ENCODE measurements at regions of chr3 and their contacts with region 1.

Region 1: DNA sequence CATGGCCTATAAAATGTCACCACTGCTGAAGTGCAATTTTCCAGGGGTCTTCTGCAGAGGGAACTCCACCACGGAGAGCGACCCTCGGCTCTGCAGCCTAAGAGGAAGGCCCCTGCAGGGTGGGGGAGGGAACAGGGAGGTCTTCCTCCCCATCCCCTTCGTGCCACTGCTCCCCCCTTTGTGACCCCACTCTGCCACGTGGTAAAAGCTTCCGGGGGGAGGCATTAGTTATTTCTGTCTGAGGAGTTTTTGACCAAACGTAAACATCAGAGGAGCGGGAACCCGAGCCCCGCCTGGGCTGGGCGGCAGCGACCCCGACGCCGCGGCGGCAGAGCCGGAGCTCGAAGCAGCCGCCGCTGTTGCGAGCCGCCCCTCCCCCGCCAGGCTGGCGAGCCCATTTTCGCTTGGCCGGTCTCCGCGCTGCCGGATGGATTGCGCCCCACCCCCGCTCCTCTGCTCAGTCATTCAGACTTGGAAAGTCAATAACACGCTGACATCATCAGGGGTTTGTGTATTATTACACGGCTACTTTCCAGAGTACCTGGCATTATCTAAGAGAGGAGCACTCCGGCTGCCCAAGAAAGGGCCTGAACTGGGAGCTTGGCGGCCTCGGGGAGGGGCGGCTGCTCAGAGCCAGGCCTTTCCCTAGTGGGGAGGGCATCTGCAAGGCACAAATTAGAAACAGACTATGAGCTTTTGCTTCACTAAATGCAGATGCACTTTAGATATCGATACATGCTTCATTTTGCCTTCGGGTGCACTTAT is 162.5 kb upstream of the TBL1XR1 start:
- DNase-seq: peak; percentile 93
- H3K4me3 Mint-ChIP-seq: peak overlapping the region; percentile 71
- H3K27ac Mint-ChIP-seq: peak overlapping the region; percentile 91
- H3K4me1 Mint-ChIP-seq: peaks cover 51% of the 10 kb centered on the region
- H3K27me3 Mint-ChIP-seq: peaks cover 2% of the 10 kb centered on the region

Region 2: GRCh38 chr3:177057768-177058167 is 302.0 kb before region 1 on chr3:
- intact Hi-C with region 1: loop called (anchors 1 kb)
- DNase-seq: peak; percentile 22
- H3K4me3 Mint-ChIP-seq: no peak overlapping the region
- H3K27ac Mint-ChIP-seq: no peak overlapping the region
- H3K4me1 Mint-ChIP-seq: peaks cover 22% of the 10 kb centered on the region
- H3K27me3 Mint-ChIP-seq: no peaks in the 10 kb centered on the region

Region 3: DNA sequence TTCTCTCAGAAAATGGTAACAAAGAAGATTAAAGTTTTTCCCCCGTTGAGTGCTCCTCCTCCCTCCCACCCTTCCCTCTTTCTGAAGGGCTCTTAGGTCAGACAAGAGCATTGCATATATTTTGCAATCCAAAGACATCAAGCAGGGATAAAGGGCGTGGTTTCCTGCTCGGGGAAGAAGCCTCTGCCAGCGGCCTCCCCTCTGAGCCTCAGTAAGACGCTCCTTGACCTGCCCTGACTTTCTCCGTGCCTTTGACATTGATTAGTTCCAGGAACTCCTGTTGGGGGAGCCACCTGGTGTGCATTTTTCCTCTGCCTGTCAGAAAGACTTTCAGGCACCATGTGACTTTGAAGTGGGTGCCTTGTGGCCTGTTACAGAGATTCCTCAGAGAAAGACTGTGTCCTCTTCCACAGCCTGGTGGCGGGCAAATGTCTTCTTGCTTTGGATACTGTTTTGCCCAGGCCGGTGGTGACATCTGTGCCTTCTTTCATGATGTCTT is 75.3 kb before region 1 on chr3:
- intact Hi-C with region 1: loop called (anchors 1 kb)
- DNase-seq: peak; percentile 9
- H3K4me3 Mint-ChIP-seq: no peak overlapping the region
- H3K27ac Mint-ChIP-seq: no peak overlapping the region
- H3K4me1 Mint-ChIP-seq: peaks cover 23% of the 10 kb centered on the region
- H3K27me3 Mint-ChIP-seq: no peaks in the 10 kb centered on the region

Region 4: GRCh38 chr3:177337541-177338331 is 22.0 kb before region 1 on chr3:
- intact Hi-C with region 1: loop called (anchors 1 kb)
- DNase-seq: peak; percentile 43
- H3K4me3 Mint-ChIP-seq: no peak overlapping the region
- H3K27ac Mint-ChIP-seq: peak overlapping the region; percentile 87
- H3K4me1 Mint-ChIP-seq: peaks cover 45% of the 10 kb centered on the region
- H3K27me3 Mint-ChIP-seq: no peaks in the 10 kb centered on the region

Region 5: GRCh38 chr3:177419904-177420601 is 60.3 kb after region 1 on chr3:
- intact Hi-C with region 1: loop called (anchors 1 kb)
- DNase-seq: no peak
- H3K4me3 Mint-ChIP-seq: no peak overlapping the region
- H3K27ac Mint-ChIP-seq: peak overlapping the region; percentile 60
- H3K4me1 Mint-ChIP-seq: peaks cover 39% of the 10 kb centered on the region
- H3K27me3 Mint-ChIP-seq: no peaks in the 10 kb centered on the region

Region 6: GRCh38 chr3:177589911-177590381 is 230.2 kb after region 1 on chr3:
- intact Hi-C with region 1: loop called (anchors 5 kb)
- DNase-seq: no peak
- H3K4me3 Mint-ChIP-seq: no peak overlapping the region
- H3K27ac Mint-ChIP-seq: peak overlapping the region; percentile 9
- H3K4me1 Mint-ChIP-seq: peaks cover 32% of the 10 kb centered on the region
- H3K27me3 Mint-ChIP-seq: peaks cover 4% of the 10 kb centered on the region

Region 7: GRCh38 chr3:177994976-177995375 is 635.2 kb after region 1 on chr3:
- intact Hi-C with region 1: loop called (anchors 5 kb)
- DNase-seq: no peak
- H3K4me3 Mint-ChIP-seq: no peak overlapping the region
- H3K27ac Mint-ChIP-seq: peak overlapping the region; percentile 84
- H3K4me1 Mint-ChIP-seq: peaks cover 23% of the 10 kb centered on the region
- H3K27me3 Mint-ChIP-seq: no peaks in the 10 kb centered on the region